ENCODE measurements at regions of chr5 and their contacts with region 1.

Region 1: DNA sequence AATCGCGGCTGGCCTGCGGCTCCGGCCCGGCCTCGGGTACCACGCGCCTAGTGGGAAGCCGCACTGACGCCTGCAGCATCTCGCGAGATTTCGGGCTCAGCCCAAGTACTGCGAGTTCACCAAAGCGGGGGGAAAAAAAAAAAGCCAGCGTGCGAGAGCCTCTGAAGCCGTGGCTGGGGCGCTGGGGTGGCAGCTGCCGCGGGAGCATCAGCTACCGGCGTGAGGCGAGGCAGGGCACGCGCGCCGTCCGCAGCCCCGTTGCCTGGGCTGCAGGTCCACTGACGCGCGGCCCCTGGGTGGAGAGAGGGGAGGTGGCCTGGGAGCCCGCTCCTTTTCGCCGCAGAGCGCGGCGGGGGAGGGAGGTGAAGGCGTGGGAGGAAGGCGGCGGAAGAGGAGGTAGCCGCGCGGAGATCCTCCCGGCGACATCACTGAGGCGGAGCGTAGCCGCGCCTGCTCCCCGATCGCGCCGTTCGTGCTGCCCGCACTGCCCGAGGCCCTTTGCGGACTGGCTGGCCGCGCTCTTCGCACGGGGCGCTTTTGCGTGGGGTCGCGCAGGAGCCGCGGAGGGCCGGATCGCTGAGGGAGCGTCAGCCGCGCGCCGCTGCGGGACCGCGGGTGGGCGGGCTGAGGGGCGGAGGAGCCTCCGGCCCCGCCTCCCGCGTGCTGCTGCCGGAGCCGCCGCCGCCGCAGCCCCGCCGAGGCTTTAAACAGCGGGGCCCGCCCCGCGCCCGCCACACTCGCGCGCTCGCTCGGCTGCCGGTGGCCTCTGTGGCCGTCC is at the start of gene SLC12A2:
- DNase-seq: peak; percentile 95
- ATAC-seq: peak; percentile 93
- total RNA-seq, gene SLC12A2: 10.7 TPM

Region 2: DNA sequence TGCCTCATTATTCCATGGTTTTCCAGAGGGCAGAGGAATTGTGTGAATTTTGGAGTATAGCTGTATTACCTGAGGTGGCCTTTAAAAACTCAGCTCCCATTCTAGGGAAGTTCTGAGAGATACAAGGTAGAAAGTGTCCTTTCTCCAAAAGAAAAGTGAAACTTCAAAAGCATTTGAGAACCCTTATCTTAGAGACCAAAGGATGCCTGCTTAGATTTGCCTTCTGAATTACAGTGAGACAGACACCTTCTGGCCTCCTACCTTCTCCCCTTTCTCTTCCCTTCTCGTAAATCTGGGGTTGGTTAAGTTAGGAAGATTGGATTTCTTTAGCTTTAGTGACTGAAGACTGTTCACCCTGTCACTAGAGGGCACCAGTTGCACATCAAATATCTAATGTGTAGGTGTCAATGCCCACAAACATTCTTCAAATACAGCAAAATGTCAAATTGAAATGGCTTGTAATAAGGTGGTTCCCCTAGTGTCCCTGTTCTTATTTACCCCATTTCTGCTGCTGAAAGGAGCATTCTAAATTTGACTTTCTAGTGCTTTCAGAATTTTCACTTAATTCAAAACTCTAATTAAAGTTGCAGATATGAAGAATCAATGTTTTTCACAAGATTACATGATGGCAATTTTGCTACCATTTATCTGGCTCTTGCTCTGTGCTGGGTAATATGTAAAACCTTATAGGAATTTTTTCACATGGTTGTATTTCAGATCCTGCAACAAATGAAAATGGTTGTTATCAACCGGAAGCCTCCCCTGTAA is 519.0 kb before region 1 on chr5:
- intact Hi-C with region 1: loop called (anchors 5 kb)
- DNase-seq: no peak
- ATAC-seq: no peak

Region 3: DNA sequence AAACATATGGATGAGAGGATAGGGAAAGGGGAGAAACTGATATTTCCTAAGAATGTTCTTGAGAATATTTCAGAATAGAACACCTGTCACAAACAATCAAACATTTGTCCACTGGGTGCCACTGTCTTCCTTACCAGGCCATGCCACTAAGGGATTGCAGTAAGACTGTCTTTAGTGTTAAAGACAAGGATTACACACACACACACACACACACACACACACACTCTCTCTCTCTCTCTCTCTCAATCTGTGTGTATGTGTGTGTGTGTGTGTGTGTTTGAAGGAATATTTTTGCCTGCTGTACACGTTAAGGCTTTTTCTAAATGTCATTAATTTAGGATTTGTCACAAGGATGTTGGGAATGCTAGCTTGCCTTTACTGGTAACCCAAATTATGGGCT is 325.6 kb before region 1 on chr5:
- intact Hi-C with region 1: loop called (anchors 5 kb)
- DNase-seq: no peak
- ATAC-seq: no peak

Region 4: DNA sequence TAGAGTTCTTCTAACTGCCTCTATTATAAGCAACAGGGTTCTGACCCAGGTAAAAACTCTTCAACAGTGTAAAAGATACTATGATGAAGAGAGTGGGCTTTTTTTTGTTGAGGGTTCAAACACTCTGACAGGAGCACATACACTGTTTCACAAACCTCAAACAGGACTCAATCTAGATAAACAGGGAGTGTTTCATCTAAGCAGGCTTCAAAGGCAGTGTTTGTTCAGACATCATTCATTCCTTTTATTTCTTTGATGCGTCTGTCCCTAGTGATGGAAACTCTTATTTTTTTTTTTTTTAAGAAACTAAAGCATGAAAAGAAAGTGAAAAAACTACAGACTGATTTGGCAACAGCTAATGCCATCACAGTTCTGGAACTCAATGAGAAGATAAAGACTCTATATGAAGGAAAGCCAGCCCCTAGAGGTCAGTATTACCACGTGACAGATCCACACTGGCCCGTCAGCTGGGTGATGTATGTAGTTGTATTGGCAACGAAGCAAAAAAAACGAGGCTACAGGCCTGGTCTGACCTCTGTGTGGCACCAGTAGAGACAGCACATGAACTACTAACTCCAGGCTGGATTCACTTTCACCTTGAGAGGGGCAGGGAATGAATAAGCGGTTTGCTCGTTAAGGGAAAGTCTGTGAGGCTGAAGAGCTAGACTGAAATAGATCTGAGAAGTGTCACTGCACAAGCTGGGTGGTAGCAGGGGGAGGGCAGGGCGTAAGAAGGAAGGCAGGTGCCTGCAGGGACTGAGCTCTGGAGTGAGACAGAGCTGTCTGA is 207.8 kb before region 1 on chr5:
- intact Hi-C with region 1: loop called (anchors 5 kb)
- DNase-seq: no peak
- ATAC-seq: peak; percentile 89

Region 5: DNA sequence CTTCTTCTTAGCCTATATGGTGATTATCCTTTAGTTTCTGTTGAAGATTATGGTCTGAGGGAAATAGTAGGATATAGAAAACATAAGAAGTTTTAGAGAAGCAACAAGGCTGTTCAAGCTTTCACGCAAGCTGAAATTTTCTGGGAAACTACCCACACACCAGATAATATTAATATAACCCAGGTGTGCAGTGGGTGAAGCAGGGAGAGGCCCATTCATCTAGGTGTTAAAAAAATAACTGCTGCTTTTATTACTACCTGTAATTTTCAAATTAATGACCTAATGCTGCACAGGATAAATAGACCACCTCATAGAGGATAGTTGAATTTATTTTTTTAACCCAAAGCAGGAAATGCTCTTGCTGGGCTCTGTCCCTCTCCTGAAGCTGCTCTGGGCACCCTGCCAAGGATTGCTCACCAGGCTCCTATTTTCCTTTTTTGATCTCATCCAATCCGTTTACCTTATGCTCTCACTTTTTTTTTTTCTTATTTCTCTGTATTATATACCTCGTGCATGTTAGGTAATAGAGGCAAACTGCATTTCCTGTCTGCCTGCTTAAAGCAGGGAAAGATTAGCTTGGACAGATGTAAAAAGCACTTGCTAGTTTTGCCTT is 124.0 kb before region 1 on chr5:
- intact Hi-C with region 1: loop called (anchors 2 kb)
- DNase-seq: peak; percentile 68
- ATAC-seq: no peak

Region 6: DNA sequence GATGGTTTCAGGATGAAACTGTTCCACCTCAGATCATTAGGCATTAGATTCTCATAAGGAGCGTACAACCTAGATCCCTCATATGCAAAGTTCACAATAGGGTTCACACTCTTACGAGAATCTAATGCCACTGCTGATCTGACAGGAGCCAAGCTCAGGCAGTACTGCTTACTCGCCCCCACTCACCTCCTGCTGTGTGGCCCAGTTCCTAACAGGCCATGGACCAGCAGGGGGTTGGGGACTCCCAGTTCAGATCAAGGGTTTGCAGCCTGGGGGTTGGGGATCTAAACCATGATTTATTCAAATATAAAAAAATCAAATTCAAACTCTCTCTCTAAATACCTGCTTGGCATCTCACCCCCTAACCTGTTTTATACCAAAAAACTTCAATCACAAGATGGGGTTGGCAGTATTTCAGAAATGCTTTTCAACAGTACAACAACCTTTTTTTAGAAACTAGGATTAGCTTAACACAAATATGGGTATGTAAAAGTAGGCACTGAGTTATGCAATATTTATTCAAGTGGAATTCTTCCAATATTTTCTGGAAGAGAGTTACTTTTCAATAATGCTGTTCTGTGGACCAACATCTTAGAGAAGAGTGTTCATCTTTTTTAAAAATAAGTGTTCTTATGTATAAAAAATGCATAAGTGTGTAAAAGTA is 29.8 kb before region 1 on chr5:
- intact Hi-C with region 1: no loop called
- DNase-seq: no peak
- ATAC-seq: no peak

Region 7: GRCh38 chr5:128121655-128122054 is 38.4 kb after region 1 on chr5:
- intact Hi-C with region 1: loop called (anchors 2 kb)
- DNase-seq: no peak
- ATAC-seq: no peak

Measured in Right ventricle myocardium inferior (tissue), 1 donor.